Activated naive CD4-positive, alpha-beta T cell treated with anti-CD3 and anti-CD28 coated beads for 36 hours (primary cell): ENCODE measurements at regions of chr20 and their contacts with region 1.

Region 1: GRCh38 chr20:25195014-25195961 is at the start of gene ENTPD6:
- DNase-seq: peak; percentile 88
- H3K4me3 Mint-ChIP-seq: peak within 1 kb of the TSS; percentile 88
- H3K27ac Mint-ChIP-seq: peak within 1 kb of the TSS; percentile 72
- H3K4me1 Mint-ChIP-seq: peaks cover 41% of the 10 kb centered on the region
- H3K27me3 Mint-ChIP-seq: no peaks in the 10 kb centered on the region
- total RNA-seq, gene ENTPD6: 63.6 to 66.6 TPM

Region 2: GRCh38 chr20:24357177-24357576 is 838.1 kb before region 1 on chr20:
- CTCF ChIA-PET with region 1: no interaction called
- intact Hi-C with region 1: no loop called
- DNase-seq: no peak
- H3K4me3 Mint-ChIP-seq: no peak overlapping the region
- H3K27ac Mint-ChIP-seq: no peak overlapping the region
- H3K4me1 Mint-ChIP-seq: no peaks in the 10 kb centered on the region
- H3K27me3 Mint-ChIP-seq: peaks cover 3% of the 10 kb centered on the region

Region 3: GRCh38 chr20:25057234-25058050 is 137.8 kb before region 1 on chr20:
- CTCF ChIA-PET with region 1: no interaction called
- intact Hi-C with region 1: loop called (anchors 1 kb)
- DNase-seq: peak; percentile 88
- H3K4me3 Mint-ChIP-seq: peak overlapping the region; percentile 71
- H3K27ac Mint-ChIP-seq: peak overlapping the region; percentile 72
- H3K4me1 Mint-ChIP-seq: peaks cover 45% of the 10 kb centered on the region
- H3K27me3 Mint-ChIP-seq: no peaks in the 10 kb centered on the region

Region 4: GRCh38 chr20:25148181-25148981 is 46.9 kb before region 1 on chr20:
- CTCF ChIA-PET with region 1: no interaction called
- intact Hi-C with region 1: loop called (anchors 5 kb)
- DNase-seq: peak; percentile 80
- H3K4me3 Mint-ChIP-seq: peak overlapping the region; percentile 76
- H3K27ac Mint-ChIP-seq: no peak overlapping the region
- H3K4me1 Mint-ChIP-seq: peaks cover 6% of the 10 kb centered on the region
- H3K27me3 Mint-ChIP-seq: peaks cover 4% of the 10 kb centered on the region

Region 5: DNA sequence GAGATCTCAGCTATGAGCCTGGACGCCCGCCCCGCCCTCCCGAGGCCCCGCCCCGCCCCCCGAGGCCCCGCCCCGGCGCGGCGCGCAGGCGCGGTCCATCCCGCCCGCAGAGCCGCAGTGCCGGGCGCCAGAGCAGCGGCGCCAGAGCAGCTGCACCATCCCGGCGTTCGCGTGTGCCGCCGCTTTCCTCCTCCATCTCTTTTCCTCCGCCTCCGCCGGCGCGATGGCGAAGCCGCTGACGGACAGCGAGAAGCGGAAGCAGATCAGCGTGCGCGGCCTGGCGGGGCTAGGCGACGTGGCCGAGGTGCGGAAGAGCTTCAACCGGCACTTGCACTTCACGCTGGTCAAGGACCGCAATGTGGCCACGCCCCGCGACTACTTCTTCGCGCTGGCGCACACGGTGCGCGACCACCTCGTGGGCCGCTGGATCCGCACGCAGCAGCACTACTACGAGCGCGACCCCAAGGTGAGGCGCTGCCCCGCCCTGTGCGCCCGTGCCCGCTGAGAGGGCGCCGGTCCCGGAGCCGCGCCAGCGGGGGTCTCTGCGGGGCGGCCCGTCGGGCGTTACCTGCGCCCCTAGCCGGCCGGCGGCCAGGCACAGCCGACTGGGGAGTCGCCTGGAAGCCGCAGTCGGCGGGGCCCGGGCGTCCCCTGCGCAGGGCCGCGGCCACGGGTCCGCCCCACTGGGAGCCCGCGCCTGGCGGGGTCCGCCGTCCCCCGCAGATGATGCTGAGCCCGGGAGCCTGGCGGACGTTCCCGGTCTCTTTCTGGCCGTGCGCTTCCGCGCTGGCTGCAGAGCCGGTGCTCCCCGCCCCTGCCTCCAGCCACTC is 52.9 kb after region 1 on chr20 and contains the start of gene PYGB:
- CTCF ChIA-PET with region 1: interaction called, 5 read pairs
- intact Hi-C with region 1: loop called (anchors 1 kb)
- DNase-seq: peak; percentile 68
- H3K4me3 Mint-ChIP-seq: peak within 1 kb of the TSS; percentile 91
- H3K27ac Mint-ChIP-seq: peak within 1 kb of the TSS; percentile 82
- H3K4me1 Mint-ChIP-seq: peaks cover 57% of the 10 kb centered on the region
- H3K27me3 Mint-ChIP-seq: peaks cover 7% of the 10 kb centered on the region
- total RNA-seq, gene PYGB: 19.6 to 20.0 TPM

Region 6: DNA sequence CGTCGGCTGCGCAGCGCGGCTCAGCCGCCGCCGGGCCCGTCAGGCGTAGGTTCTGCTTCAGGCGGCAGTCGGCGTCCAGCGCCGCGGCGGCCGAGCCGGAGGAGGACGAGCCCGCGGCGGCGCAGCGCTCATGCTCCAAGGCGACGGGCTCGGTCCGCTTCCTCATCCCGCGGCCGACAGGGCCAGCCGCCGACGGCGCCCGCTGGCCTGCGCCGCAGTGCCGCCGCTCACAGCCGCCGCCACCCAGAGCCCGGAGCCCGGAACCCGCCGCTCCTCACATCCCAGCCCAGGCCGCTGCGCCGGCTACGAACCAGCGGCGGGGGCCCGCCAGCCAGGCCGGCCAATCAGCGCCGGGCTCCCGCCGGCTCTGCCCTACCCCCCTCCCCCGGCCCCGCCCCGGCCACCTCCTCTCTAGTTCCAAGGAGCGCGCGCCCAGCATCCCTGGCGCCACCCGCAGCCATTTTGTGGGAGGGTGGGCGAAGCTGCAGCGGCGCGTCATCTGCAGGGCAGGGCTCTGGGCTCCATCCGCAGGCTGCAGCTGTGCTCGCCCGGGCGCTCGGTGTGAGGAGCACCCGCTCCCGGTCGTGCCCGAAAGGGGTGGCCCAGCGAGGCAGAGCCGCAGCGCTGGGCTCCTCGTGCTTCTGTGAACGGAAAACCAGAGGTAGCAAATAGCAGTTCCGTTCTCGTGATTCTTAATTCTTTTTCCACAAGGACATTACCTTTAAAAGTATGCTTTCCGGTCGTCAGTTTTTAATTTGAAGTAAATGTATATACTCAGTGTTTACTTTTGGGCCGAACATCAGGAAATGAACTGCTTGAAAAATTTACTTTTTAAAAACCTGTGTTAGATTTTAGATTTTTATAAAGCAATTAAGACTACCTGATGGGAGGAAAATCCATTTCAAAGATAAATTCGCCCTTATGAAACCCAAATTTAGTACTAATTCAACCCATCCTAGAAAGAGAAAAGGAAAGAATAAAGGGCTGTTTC is 195.5 kb after region 1 on chr20 and contains the start of gene ABHD12:
- CTCF ChIA-PET with region 1: no interaction called
- intact Hi-C with region 1: loop called (anchors 1 kb)
- DNase-seq: peak; percentile 97
- H3K4me3 Mint-ChIP-seq: peak within 1 kb of the TSS; percentile 87
- H3K27ac Mint-ChIP-seq: peak within 1 kb of the TSS; percentile 81
- H3K4me1 Mint-ChIP-seq: peaks cover 11% of the 10 kb centered on the region
- H3K27me3 Mint-ChIP-seq: no peaks in the 10 kb centered on the region
- total RNA-seq, gene ABHD12: 13.0 to 14.7 TPM

Region 7: DNA sequence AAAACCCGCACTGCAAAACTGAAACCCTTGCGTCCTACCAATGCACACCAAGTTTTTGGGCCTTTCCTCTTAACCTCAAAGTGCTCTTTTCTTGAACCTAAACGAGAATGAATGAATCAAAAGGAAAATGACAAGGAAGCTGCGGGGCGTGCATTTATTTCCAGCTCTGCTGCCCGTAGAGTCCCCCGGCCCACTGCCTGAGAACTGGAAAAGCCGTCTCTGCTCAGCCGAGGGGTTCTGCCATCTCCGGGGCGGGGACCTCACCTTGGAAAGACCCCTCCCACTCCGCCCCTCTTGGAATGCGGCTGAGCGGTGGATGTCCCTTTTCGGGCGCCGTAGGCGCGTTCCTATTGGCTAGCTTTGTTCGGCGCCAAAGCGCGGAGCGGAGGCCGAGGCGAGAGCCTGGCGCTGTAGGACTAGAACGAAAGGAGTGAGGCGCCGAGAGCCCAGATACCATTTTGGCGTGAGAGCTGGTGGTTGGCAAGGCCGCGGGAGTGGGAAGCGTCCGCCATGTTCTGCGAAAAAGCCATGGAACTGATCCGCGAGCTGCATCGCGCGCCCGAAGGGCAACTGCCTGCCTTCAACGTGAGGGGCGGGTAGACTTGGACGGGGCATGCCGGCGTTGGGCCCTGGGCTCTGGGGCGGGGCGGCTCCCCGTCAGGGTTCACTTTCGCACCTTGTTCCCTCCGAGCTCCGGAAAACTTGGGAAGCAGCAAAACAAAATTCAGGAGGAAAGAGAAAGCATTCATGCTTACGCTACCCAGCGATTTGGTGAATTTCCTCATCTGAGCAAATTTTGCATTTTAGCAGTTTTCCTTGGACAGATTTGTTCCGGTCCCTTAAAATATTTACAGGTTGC is 212.3 kb after region 1 on chr20 and contains the start of gene GINS1:
- CTCF ChIA-PET with region 1: no interaction called
- intact Hi-C with region 1: loop called (anchors 1 kb)
- DNase-seq: peak; percentile 92
- H3K4me3 Mint-ChIP-seq: peak within 1 kb of the TSS; percentile 92
- H3K27ac Mint-ChIP-seq: peak within 1 kb of the TSS; percentile 91
- H3K4me1 Mint-ChIP-seq: peaks cover 17% of the 10 kb centered on the region
- H3K27me3 Mint-ChIP-seq: no peaks in the 10 kb centered on the region
- total RNA-seq, gene GINS1: 25.5 to 27.7 TPM

Region 8: DNA sequence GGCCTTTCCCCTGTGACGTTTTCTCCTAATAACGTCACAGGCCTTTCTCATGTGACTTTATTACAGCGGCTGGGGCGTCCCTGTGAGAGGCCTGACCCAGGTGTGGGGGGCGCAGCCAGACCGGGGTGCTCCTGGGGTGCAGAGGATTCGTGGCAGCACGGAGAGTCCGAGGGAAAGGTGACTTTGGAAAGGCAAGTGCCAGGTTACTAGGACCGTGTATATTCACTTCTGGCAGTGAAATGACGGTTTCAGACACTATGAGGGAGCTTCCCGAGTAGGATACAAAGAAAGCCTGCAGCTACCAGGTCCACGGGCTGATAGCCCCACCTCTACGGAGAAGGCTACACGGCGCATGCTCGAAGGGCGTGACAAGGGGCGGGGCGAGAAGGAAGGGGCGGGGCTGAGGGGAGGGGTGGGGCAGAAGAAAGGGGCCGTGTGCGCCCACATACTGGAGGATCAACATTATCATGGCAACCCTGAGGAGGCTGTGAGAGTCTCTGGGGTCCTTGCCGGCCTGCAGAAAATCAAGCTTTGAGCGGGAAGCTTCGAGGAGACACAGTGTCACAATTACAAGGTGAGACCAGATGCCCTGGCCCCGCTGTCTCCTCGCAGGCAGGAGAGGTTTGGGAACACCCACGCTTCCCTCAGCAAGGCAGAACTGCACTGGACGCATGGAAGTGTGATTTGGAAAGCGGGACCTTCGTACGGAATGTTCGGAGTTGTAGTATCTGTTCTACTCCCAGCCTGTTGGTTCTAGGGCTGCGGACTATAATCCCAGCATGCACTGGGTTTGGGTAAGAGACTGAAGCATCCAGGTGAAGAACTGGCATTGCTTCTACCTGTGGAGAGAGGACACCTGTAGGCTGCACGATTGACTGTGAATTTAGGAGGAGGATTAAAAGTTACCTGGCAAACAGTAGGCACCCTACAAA is 555.7 kb after region 1 on chr20:
- CTCF ChIA-PET with region 1: no interaction called
- intact Hi-C with region 1: loop called (anchors 5 kb)
- DNase-seq: peak; percentile 76
- H3K4me3 Mint-ChIP-seq: peak overlapping the region; percentile 86
- H3K27ac Mint-ChIP-seq: peak overlapping the region; percentile 77
- H3K4me1 Mint-ChIP-seq: peaks cover 15% of the 10 kb centered on the region
- H3K27me3 Mint-ChIP-seq: no peaks in the 10 kb centered on the region